ENCODE measurements at regions of chr10 and their contacts with region 1.

Region 1: GRCh38 chr10:114304017-114304570 is 65.0 kb downstream of the VWA2 start:
- DNase-seq: peak in 1 of 2 experiments; percentile 86
- H3K4me3 ChIP-seq: peak overlapping the region; percentile 38 to 78 (median 70)
- H3K27ac ChIP-seq: no peak overlapping the region
- H3K4me1 ChIP-seq: peaks cover 0 to 8% (median 2%) of the 10 kb centered on the region in 4 experiments; a peak in 4 of 7 replicates
- H3K27me3 ChIP-seq: no peaks in the 10 kb centered on the region
- CTCF ChIP-seq: peak; percentile 69 to 90 (median 90)
- EP300 ChIP-seq: no peak
- POLR2A ChIP-seq: no peak
- RAD21 ChIP-seq: peak; percentile 94

Region 2: GRCh38 chr10:113993489-113993991 is 310.6 kb before region 1 on chr10:
- CTCF ChIA-PET with region 1: no interaction called
- POLR2A ChIA-PET with region 1: no interaction called
- DNase-seq: no peak
- H3K4me3 ChIP-seq: no peak overlapping the region
- H3K27ac ChIP-seq: no peak overlapping the region
- H3K4me1 ChIP-seq: no peaks in the 10 kb centered on the region
- H3K27me3 ChIP-seq: no peaks in the 10 kb centered on the region
- CTCF ChIP-seq: no peak
- EP300 ChIP-seq: no peak
- POLR2A ChIP-seq: no peak
- RAD21 ChIP-seq: no peak

Region 3: GRCh38 chr10:114131094-114131493 is 173.0 kb before region 1 on chr10:
- CTCF ChIA-PET with region 1: no interaction called
- POLR2A ChIA-PET with region 1: no interaction called
- DNase-seq: no peak
- H3K4me3 ChIP-seq: no peak overlapping the region
- H3K27ac ChIP-seq: no peak overlapping the region
- H3K4me1 ChIP-seq: no peaks in the 10 kb centered on the region
- H3K27me3 ChIP-seq: no peaks in the 10 kb centered on the region
- CTCF ChIP-seq: no peak
- EP300 ChIP-seq: no peak
- POLR2A ChIP-seq: no peak
- RAD21 ChIP-seq: no peak

Region 4: DNA sequence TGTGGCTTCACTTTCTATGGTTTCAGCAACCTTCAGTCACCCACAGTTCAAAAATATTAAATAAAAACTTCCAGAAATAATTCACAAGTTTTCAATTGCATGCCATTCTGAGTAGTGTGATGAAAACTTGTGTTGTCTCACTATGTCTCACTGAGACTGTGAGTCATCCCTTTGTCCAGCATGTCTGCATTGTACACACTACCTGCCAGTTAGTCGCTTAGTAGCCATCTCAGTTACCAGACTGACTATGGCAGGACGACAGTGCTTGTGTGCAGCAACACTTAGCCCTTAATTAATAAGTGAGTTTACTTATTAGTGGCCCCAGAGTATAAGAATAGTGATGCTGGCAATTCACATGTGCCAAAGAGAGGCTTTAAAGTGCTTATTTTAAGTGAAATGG is 152.6 kb before region 1 on chr10:
- CTCF ChIA-PET with region 1: no interaction called
- POLR2A ChIA-PET with region 1: no interaction called
- DNase-seq: no peak
- H3K4me3 ChIP-seq: no peak overlapping the region
- H3K27ac ChIP-seq: no peak overlapping the region
- H3K4me1 ChIP-seq: no peaks in the 10 kb centered on the region
- H3K27me3 ChIP-seq: no peaks in the 10 kb centered on the region
- CTCF ChIP-seq: no peak
- EP300 ChIP-seq: no peak
- POLR2A ChIP-seq: no peak
- RAD21 ChIP-seq: no peak

Region 5: GRCh38 chr10:114208351-114208750 is 95.7 kb before region 1 on chr10:
- CTCF ChIA-PET with region 1: no interaction called
- POLR2A ChIA-PET with region 1: no interaction called
- DNase-seq: peak in 1 of 2 experiments; percentile 7
- H3K4me3 ChIP-seq: no peak overlapping the region
- H3K27ac ChIP-seq: no peak overlapping the region
- H3K4me1 ChIP-seq: peaks cover 0 to 3% (median 1%) of the 10 kb centered on the region in 4 experiments; a peak in 2 of 7 replicates
- H3K27me3 ChIP-seq: no peaks in the 10 kb centered on the region
- CTCF ChIP-seq: no peak
- EP300 ChIP-seq: no peak
- POLR2A ChIP-seq: no peak
- RAD21 ChIP-seq: no peak

Region 6: GRCh38 chr10:114285961-114286441 is 18.1 kb before region 1 on chr10:
- CTCF ChIA-PET with region 1: interaction called, 29 read pairs
- POLR2A ChIA-PET with region 1: no interaction called
- DNase-seq: no peak
- H3K4me3 ChIP-seq: no peak overlapping the region
- H3K27ac ChIP-seq: no peak overlapping the region
- H3K4me1 ChIP-seq: no peaks in the 10 kb centered on the region; a peak in 2 of 7 replicates
- H3K27me3 ChIP-seq: no peaks in the 10 kb centered on the region
- CTCF ChIP-seq: no peak
- EP300 ChIP-seq: no peak
- POLR2A ChIP-seq: no peak
- RAD21 ChIP-seq: no peak

Region 7: DNA sequence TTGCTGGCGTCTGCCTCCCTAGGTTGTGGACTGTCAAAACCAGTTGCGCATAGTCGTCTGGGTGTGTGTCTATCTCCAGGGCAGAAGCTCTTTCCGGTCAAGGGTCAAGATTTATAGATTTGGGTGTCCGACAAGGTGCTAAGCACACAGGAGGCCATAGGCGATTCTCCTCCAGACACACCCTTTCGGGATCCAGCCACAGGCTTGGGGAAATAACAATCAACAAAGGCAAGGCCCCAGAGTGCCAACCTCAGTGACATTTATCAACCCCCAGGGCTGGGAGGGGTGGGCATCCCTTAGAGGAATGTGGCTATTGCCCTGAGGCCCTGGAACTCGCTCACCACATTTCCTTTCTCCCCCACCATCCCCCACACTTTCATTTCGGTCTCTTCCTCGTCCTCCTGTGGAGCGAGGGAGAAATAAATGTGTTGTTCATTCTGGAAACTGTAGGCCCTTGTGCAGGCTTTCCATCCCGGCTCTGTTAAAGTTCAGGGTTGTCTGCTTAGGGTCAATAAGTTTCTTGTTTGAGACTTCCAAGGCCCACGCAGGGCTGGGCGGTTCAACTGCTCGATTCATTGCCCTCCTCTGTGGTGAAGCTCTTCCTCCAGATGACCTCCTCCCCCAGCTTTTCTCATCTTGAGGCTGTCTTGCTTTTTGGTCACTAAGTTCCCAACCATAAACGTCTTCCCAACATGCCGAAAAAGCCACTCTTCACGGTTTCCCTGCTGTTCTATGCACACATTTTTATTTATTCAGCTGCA is 42.4 kb after region 1 on chr10:
- CTCF ChIA-PET with region 1: interaction called, 16 read pairs
- POLR2A ChIA-PET with region 1: no interaction called
- DNase-seq: no peak
- H3K4me3 ChIP-seq: no peak overlapping the region
- H3K27ac ChIP-seq: no peak overlapping the region
- H3K4me1 ChIP-seq: peaks cover 0 to 7% (median 0%) of the 10 kb centered on the region in 4 experiments; a peak in 3 of 7 replicates
- H3K27me3 ChIP-seq: no peaks in the 10 kb centered on the region
- CTCF ChIP-seq: no peak
- EP300 ChIP-seq: no peak
- POLR2A ChIP-seq: no peak
- RAD21 ChIP-seq: no peak

Region 8: GRCh38 chr10:114388275-114388674 is 84.2 kb after region 1 on chr10:
- CTCF ChIA-PET with region 1: interaction called, 154 read pairs
- POLR2A ChIA-PET with region 1: interaction called, 3 read pairs
- DNase-seq: no peak
- H3K4me3 ChIP-seq: no peak overlapping the region
- H3K27ac ChIP-seq: no peak overlapping the region
- H3K4me1 ChIP-seq: peaks cover 0 to 13% (median 2%) of the 10 kb centered on the region in 4 experiments; a peak in 3 of 7 replicates
- H3K27me3 ChIP-seq: no peaks in the 10 kb centered on the region
- CTCF ChIP-seq: no peak
- EP300 ChIP-seq: no peak
- POLR2A ChIP-seq: no peak
- RAD21 ChIP-seq: no peak

Region 9: DNA sequence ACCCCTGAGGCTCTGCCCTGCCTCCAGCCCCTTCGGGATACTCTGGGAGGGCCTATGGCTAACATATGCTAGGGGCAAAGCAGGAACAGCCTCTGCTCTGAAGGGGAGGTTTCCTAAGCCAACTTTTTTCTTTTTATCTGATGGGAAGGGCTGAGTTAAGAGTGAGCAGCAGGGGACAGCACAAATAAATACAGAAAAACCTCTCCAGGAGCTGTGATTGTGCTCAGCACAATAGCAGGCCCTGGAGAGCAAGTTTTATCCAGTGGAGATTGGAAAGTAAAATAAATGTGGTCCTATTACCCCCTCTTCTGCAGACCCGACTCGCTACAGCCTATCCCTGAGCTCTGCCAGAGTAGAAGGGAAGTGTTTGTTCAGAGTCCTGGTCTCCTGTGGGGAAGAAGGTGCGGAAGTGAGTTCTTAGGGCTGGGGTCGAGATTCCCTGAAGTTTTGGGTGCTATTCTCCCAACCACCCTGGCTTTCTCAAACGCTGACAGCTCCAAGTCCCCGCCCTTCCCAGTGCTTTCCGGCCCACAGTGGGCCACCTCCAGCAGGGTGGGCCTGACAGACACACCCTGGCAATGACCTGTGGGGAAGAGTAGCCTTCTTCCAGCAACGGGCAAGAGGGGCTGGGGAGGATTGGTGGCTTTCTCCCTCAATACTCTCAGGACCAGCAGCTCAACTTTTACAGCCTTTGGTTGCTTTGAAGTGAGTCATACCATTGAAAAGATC is 123.2 kb after region 1 on chr10:
- CTCF ChIA-PET with region 1: interaction called, 269 read pairs
- POLR2A ChIA-PET with region 1: no interaction called
- DNase-seq: no peak
- H3K4me3 ChIP-seq: no peak overlapping the region
- H3K27ac ChIP-seq: no peak overlapping the region
- H3K4me1 ChIP-seq: peaks cover 0 to 5% (median 0%) of the 10 kb centered on the region in 4 experiments; a peak in 1 of 7 replicates
- H3K27me3 ChIP-seq: no peaks in the 10 kb centered on the region; a peak in 1 of 7 replicates
- CTCF ChIP-seq: no peak
- EP300 ChIP-seq: no peak
- POLR2A ChIP-seq: no peak
- RAD21 ChIP-seq: peak; percentile 39 to 40; a peak in 3 of 4 replicates

Region 10: GRCh38 chr10:114458955-114459354 is 154.9 kb after region 1 on chr10:
- CTCF ChIA-PET with region 1: interaction called, 91 read pairs
- POLR2A ChIA-PET with region 1: interaction called, 4 read pairs
- DNase-seq: peak; percentile 39 to 82
- H3K4me3 ChIP-seq: no peak overlapping the region
- H3K27ac ChIP-seq: no peak overlapping the region
- H3K4me1 ChIP-seq: no peaks in the 10 kb centered on the region
- H3K27me3 ChIP-seq: no peaks in the 10 kb centered on the region
- CTCF ChIP-seq: peak; percentile 76 to 85 (median 83)
- EP300 ChIP-seq: no peak
- POLR2A ChIP-seq: no peak
- RAD21 ChIP-seq: peak; percentile 76 to 82

Measured in H1 (cell line).